Heart right ventricle (tissue), 16 donors: ENCODE measurements at regions of chr1 and their contacts with region 1.

Region 1: DNA sequence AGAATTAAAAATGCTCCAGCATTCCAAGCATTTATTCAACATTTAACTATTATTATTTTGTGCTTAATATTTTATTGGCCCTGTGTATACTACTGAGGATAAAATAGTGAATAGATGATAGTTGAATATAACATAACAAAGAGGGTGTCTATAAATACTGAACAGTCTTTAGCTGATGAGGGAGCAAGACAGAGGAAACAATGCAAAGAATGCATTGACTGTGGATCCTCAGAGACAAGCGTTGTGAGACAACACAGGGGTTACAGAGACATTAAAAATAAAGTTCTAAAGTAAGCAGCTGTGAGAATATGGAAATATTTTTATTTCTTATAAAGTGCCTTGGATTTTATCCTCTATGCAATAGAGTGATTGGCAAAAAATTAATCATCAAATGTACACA is 1133.1 kb downstream of the PLA2G4A start:
- DNase-seq: no peak
- ATAC-seq: no peak
- H3K4me3 ChIP-seq: no peak overlapping the region
- H3K27ac ChIP-seq: no peak overlapping the region
- H3K4me1 ChIP-seq: no peaks in the 10 kb centered on the region
- H3K27me3 ChIP-seq: no peaks in the 10 kb centered on the region
- CTCF ChIP-seq: no peak

Region 2: GRCh38 chr1:187928288-187928687 is 33.6 kb before region 1 on chr1:
- intact Hi-C with region 1: loop called in 1 of 10 experiments (anchors 1 kb)
- DNase-seq: no peak
- ATAC-seq: no peak
- H3K4me3 ChIP-seq: no peak overlapping the region
- H3K27ac ChIP-seq: no peak overlapping the region
- H3K4me1 ChIP-seq: no peaks in the 10 kb centered on the region
- H3K27me3 ChIP-seq: no peaks in the 10 kb centered on the region
- CTCF ChIP-seq: peak in 3 of 9 donors; percentile 19 to 39 (median 31)